T-cell (primary cell): ENCODE measurements at regions of chr4 and their contacts with region 1.

Region 1: GRCh38 chr4:89024051-89024675 is 32.8 kb downstream of the FAM13A start:
- DNase-seq: peak in 32 of 35 experiments; percentile 6 to 85 (median 42)
- ATAC-seq: peak; percentile 88 to 99 (median 90)
- H3K4me3 ChIP-seq: no peak overlapping the region
- H3K4me3 Mint-ChIP-seq: no peak overlapping the region
- H3K27ac ChIP-seq: no peak overlapping the region
- H3K27ac Mint-ChIP-seq: no peak overlapping the region
- H3K4me1 ChIP-seq: peaks cover 0 to 3% of the 10 kb centered on the region in 2 experiments
- H3K4me1 Mint-ChIP-seq: peaks cover 2 to 8% (median 3%) of the 10 kb centered on the region in 3 donors
- H3K27me3 ChIP-seq: no peaks in the 10 kb centered on the region
- H3K27me3 Mint-ChIP-seq: peaks cover 0 to 1% of the 10 kb centered on the region in 2 donors

Region 2: DNA sequence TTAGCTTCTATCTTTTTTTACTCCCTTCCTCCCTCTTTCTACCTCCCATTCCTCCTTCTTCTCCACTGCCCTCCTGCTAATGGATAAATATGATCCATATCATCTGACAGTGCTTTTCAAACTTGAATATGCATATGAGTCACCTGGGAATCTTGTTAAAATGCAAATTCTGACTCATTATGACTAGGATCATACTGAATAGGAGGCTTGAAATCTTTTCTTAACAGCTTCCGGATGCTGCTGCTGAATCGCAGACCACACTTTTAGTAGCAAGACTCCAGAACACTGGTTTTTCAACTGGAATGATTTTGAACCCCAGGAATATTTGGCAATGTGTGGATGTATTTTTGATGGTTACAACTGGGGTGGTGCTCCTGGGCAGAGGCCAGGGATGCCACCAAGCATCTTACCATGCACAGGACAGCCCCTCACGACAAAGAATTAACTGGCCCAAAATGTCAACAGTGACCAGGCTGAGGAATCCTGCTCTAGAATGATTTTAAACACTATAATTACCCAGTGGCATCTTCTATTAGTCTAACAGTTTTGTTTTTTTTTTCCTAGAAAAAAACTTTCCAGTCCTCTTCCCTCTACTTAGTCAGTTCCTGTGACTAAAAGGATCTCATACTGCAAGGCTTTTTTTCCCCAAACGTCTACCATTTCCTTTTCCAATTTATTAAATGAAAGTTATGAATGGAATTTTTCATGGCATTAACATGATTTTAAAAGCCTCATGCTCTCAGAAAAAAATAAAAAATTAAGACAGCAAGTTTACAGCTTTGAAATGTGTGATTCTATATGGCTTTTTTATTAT is 490.0 kb before region 1 on chr4:
- CTCF ChIA-PET with region 1: interaction called, 7 to 10 read pairs
- POLR2A ChIA-PET with region 1: no interaction called
- DNase-seq: no peak
- ATAC-seq: no peak
- H3K4me3 ChIP-seq: no peak overlapping the region
- H3K4me3 Mint-ChIP-seq: no peak overlapping the region
- H3K27ac ChIP-seq: no peak overlapping the region
- H3K27ac Mint-ChIP-seq: no peak overlapping the region
- H3K4me1 ChIP-seq: peaks cover 0 to 3% of the 10 kb centered on the region in 2 experiments
- H3K4me1 Mint-ChIP-seq: peaks cover 0 to under 1% (median under 1%) of the 10 kb centered on the region in 3 donors
- H3K27me3 ChIP-seq: no peaks in the 10 kb centered on the region
- H3K27me3 Mint-ChIP-seq: no peaks in the 10 kb centered on the region

Region 3: GRCh38 chr4:88549815-88550214 is 474.3 kb before region 1 on chr4:
- CTCF ChIA-PET with region 1: interaction called in 1 of 2 experiments, 11 read pairs
- POLR2A ChIA-PET with region 1: no interaction called
- DNase-seq: no peak
- ATAC-seq: no peak
- H3K4me3 ChIP-seq: no peak overlapping the region
- H3K4me3 Mint-ChIP-seq: no peak overlapping the region
- H3K27ac ChIP-seq: no peak overlapping the region
- H3K27ac Mint-ChIP-seq: no peak overlapping the region
- H3K4me1 ChIP-seq: no peaks in the 10 kb centered on the region
- H3K4me1 Mint-ChIP-seq: no peaks in the 10 kb centered on the region
- H3K27me3 ChIP-seq: no peaks in the 10 kb centered on the region
- H3K27me3 Mint-ChIP-seq: no peaks in the 10 kb centered on the region

Region 4: DNA sequence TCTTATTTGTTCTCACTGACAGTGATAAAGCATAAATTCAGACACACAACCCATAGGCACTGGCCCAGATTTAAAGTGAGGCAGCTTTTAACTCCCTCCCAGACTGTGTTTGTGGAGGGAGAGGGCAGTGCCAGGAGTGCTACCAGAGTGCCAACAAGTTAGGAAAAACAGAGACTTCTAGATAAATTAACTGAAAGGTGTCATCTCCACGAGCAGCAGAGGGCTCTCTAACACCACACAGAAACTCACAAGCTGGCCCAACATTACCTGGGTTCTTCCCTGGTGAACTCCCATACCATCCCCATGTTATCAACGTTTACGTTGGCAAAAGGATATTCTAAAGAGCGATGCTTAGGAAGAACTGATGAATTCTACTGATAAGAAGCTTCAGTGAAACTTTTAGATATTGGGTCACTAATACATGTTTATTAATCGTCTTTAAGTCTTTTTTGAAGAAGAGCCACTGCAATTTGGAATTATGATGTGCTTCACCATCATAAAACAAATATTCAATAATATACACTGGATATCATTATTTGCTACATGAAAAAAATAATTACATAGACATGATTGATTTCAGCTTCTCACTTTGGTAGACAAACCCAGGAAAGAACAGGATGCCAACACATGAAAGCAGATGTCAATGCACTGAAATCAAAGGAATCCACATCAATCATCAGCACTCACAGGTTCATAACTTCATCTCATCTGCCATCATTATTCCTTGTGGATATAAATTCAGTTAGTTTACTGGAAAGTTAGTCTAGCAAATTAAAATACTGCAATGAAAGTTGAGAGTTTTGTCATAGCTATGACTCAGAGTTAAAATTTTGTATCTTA is 205.3 kb before region 1 on chr4:
- CTCF ChIA-PET with region 1: interaction called, 130 to 131 read pairs
- POLR2A ChIA-PET with region 1: interaction called, 6 to 8 read pairs
- DNase-seq: peak in 33 of 35 experiments; percentile 1 to 76 (median 32)
- ATAC-seq: no peak
- H3K4me3 ChIP-seq: no peak overlapping the region
- H3K4me3 Mint-ChIP-seq: peak overlapping the region in 2 of 3 donors; percentile 31 to 95
- H3K27ac ChIP-seq: no peak overlapping the region
- H3K27ac Mint-ChIP-seq: peak overlapping the region in 1 of 2 donors; percentile 14
- H3K4me1 ChIP-seq: peaks cover 6 to 44% of the 10 kb centered on the region in 2 experiments
- H3K4me1 Mint-ChIP-seq: peaks cover 43 to 69% (median 51%) of the 10 kb centered on the region in 3 donors
- H3K27me3 ChIP-seq: no peaks in the 10 kb centered on the region
- H3K27me3 Mint-ChIP-seq: no peaks in the 10 kb centered on the region

Region 5: DNA sequence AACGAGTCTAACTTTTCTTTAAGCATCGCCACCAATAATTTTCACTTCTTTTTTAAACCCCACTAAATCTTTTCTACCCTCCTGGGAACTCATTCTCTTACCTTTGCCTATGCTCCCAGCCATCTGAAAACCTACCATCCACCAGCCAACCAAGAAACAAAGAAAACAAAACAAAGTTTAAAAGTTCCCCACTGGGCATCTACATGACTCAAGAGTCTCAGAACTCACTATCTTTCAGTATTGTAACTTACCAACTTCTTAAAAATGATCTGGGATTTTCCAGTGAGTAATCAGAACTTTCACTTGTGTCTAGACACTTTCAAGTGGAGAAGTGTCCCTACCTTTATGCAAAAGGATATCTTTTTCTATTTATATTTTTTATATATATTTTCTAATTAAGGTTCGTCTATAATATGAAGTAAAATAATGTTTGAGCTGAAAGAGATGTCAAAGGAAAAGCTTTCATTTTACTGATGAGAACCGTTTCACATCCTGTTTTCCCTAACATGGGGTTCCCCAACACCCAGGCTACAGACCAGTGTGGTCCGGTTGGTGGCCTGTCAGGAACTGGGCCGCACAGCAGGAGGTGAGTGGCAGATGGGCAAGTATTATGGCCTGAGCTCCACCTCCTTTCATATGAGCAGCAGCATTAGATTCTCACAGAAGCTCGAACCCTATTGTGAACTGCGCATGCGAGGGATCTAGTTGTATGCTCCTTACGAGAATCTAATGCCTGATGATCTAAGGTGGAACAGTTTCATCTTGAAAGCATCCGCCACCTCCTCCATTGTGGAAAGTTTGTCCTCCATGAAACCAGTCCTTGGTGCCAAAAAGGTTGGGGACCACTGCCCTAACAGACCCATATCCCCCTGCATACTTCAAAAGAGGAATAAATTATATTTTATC is 77.3 kb after region 1 on chr4:
- CTCF ChIA-PET with region 1: no interaction called
- POLR2A ChIA-PET with region 1: no interaction called
- DNase-seq: no peak
- ATAC-seq: no peak
- H3K4me3 ChIP-seq: no peak overlapping the region
- H3K4me3 Mint-ChIP-seq: no peak overlapping the region
- H3K27ac ChIP-seq: no peak overlapping the region
- H3K27ac Mint-ChIP-seq: no peak overlapping the region
- H3K4me1 ChIP-seq: no peaks in the 10 kb centered on the region
- H3K4me1 Mint-ChIP-seq: peaks cover 0 to 7% (median 6%) of the 10 kb centered on the region in 3 donors
- H3K27me3 ChIP-seq: peaks cover 0 to 11% of the 10 kb centered on the region in 2 experiments
- H3K27me3 Mint-ChIP-seq: peaks cover 3 to 4% of the 10 kb centered on the region in 2 donors